A673 (cell line): ENCODE measurements at regions of chr1 and their contacts with region 1.

Region 1: GRCh38 chr1:20087668-20088067 is 17.7 kb downstream of the PLA2G5 start:
- DNase-seq: no peak
- H3K4me3 ChIP-seq: no peak overlapping the region
- H3K27ac ChIP-seq: no peak overlapping the region
- H3K4me1 ChIP-seq: no peaks in the 10 kb centered on the region
- H3K27me3 ChIP-seq: peaks cover 7% of the 10 kb centered on the region
- CTCF ChIP-seq: peak; percentile 34; the same call in 1 of the 2 replicates

Region 2: DNA sequence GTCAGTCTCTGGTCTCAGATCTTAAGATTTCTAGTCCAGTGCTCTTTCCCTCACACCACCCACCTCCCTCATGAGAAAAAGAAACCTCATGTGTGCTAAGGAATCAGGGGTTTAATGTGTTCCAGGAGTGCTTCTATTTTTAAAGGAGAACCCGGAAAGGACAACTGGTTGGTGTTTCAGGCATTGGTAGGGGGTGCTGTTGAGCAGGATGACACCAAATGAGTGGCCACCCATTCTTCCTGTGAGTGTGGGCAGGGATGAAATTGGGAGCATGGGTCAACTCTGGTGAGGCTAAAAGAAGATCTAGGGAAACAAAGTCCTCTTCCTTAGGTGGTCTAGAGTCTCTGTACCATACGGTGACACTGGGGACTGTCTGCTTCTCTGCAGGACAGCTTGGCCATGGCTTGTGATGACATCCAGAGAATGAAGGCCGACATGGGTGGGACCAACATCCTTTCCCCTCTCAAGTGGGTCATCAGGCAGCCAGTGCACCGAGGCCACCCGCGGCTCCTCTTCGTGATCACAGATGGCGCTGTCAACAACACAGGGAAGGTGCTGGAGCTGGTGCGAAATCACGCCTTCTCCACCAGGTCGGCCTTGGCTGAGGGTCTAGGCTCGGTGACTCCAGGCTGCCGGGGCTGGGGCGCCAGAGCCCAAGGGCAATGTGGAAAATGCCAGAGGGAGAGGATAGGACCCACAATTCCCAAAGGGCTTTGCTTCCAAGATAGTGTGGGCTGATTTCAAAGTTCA is 242.3 kb after region 1 on chr1:
- CTCF ChIA-PET with region 1: interaction called, 11 read pairs
- POLR2A ChIA-PET with region 1: no interaction called
- intact Hi-C with region 1: no loop called
- DNase-seq: no peak
- H3K4me3 ChIP-seq: no peak overlapping the region
- H3K27ac ChIP-seq: no peak overlapping the region
- H3K4me1 ChIP-seq: no peaks in the 10 kb centered on the region
- H3K27me3 ChIP-seq: peaks cover 9% of the 10 kb centered on the region
- CTCF ChIP-seq: peak; percentile 40